Activated CD8-positive, alpha-beta T cell treated with anti-CD3 and anti-CD28 coated beads for 36 hours (primary cell): ENCODE measurements at regions of chr2 and their contacts with region 1.

Region 1: GRCh38 chr2:121076885-121077549 is 208.0 kb downstream of the TFCP2L1 start:
- DNase-seq: peak; percentile 85
- ATAC-seq: peak; percentile 71
- H3K4me3 Mint-ChIP-seq: no peak overlapping the region
- H3K27ac Mint-ChIP-seq: no peak overlapping the region
- H3K4me1 Mint-ChIP-seq: no peaks in the 10 kb centered on the region
- H3K27me3 Mint-ChIP-seq: peaks cover 17% of the 10 kb centered on the region
- CTCF ChIP-seq: peak; percentile 95

Region 2: GRCh38 chr2:120696850-120697249 is 380.2 kb before region 1 on chr2:
- CTCF ChIA-PET with region 1: interaction called, 17 read pairs
- POLR2A ChIA-PET with region 1: interaction called, 5 read pairs
- intact Hi-C with region 1: no loop called
- DNase-seq: no peak
- ATAC-seq: no peak
- H3K4me3 Mint-ChIP-seq: no peak overlapping the region
- H3K27ac Mint-ChIP-seq: no peak overlapping the region
- H3K4me1 Mint-ChIP-seq: peaks cover 5% of the 10 kb centered on the region
- H3K27me3 Mint-ChIP-seq: peaks cover 32% of the 10 kb centered on the region
- CTCF ChIP-seq: no peak

Region 3: GRCh38 chr2:120818441-120818920 is 258.5 kb before region 1 on chr2:
- CTCF ChIA-PET with region 1: no interaction called
- POLR2A ChIA-PET with region 1: no interaction called
- intact Hi-C with region 1: loop called (anchors 10 kb)
- DNase-seq: no peak
- ATAC-seq: no peak
- H3K4me3 Mint-ChIP-seq: no peak overlapping the region
- H3K27ac Mint-ChIP-seq: no peak overlapping the region
- H3K4me1 Mint-ChIP-seq: no peaks in the 10 kb centered on the region
- H3K27me3 Mint-ChIP-seq: no peaks in the 10 kb centered on the region
- CTCF ChIP-seq: no peak

Region 4: DNA sequence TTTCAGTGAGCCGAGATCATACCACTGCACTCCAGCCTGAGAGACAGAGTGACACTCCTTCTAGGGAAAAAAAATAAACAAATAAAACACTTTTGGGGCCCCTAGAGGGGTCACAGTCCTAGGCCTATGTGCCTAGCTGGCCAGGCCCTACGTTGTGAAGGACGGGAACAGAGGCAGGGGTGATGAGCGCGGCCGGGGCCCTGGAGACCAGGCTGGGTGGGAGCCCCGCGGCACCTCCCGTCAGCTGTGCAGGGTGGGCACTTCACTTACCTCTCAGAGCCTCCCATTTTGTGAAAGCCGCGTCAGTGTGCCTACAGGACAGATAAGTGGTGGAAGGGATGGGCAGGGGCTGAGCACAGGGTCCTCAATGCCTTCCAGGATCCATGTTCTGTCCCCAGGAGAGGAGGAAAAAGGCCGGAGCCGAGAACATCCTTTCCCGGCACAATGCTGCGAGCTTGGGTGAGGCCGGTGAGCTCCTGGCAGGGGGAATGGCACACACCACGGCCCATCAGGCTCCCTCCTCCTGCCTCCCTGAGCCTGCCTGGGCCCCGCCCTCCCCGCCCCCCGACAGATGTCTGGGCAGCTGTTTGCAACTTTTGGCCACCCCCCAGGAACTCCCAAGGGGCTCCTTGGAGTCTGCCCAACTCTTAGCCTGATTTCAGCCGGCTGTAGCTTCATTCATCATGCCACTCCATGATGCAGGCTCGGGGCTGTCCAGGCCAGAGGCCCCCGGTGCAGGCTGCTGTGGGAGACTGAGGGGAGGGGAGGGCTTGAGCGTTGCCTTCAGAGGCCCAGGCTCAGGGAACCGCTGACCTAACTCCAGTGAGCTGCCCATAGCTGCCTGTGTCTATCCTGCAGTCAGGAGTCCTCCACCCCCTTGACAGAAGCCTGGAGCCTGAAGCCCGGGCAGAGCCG is 11.5 kb after region 1 on chr2:
- CTCF ChIA-PET with region 1: interaction called, 33 read pairs
- POLR2A ChIA-PET with region 1: interaction called, 15 read pairs
- intact Hi-C with region 1: no loop called
- DNase-seq: no peak
- ATAC-seq: no peak
- H3K4me3 Mint-ChIP-seq: no peak overlapping the region
- H3K27ac Mint-ChIP-seq: no peak overlapping the region
- H3K4me1 Mint-ChIP-seq: no peaks in the 10 kb centered on the region
- H3K27me3 Mint-ChIP-seq: peaks cover 5% of the 10 kb centered on the region
- CTCF ChIP-seq: no peak

Region 5: DNA sequence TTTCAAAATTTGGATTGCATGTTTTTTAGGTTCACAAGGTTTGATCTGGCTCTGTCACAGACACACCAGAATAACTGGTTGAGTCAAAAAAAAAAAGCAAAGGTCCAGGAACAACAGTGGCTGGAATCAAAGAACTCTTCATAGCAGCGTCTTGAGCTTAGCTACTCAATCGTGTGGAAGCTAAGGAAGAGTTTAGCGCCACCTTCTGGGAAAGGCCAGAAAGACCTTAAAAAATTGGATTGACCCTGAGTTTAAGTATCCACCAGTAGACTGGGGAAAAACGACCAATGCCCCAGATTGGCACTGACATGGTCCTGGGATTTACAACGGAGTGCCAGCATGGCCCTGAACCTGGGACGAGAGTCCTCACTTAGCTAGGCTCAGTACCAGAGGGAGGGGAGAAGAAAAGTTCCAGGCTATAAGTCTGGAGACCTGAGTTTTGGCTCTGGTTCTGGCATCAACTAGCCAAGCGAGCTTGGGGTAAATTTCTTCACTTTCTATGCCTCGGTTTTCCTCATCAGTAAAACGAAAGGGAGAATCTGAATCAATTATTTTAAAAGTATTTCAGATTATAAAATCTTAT is 279.1 kb after region 1 on chr2:
- CTCF ChIA-PET with region 1: interaction called, 14 read pairs
- POLR2A ChIA-PET with region 1: no interaction called
- intact Hi-C with region 1: no loop called
- DNase-seq: peak; percentile 49
- ATAC-seq: peak; percentile 74
- H3K4me3 Mint-ChIP-seq: no peak overlapping the region
- H3K27ac Mint-ChIP-seq: no peak overlapping the region
- H3K4me1 Mint-ChIP-seq: no peaks in the 10 kb centered on the region
- H3K27me3 Mint-ChIP-seq: no peaks in the 10 kb centered on the region
- CTCF ChIP-seq: peak; percentile 57